Prostate gland (tissue), 2 donors: ENCODE measurements at regions of chr13 and their contacts with region 1.

Region 1: DNA sequence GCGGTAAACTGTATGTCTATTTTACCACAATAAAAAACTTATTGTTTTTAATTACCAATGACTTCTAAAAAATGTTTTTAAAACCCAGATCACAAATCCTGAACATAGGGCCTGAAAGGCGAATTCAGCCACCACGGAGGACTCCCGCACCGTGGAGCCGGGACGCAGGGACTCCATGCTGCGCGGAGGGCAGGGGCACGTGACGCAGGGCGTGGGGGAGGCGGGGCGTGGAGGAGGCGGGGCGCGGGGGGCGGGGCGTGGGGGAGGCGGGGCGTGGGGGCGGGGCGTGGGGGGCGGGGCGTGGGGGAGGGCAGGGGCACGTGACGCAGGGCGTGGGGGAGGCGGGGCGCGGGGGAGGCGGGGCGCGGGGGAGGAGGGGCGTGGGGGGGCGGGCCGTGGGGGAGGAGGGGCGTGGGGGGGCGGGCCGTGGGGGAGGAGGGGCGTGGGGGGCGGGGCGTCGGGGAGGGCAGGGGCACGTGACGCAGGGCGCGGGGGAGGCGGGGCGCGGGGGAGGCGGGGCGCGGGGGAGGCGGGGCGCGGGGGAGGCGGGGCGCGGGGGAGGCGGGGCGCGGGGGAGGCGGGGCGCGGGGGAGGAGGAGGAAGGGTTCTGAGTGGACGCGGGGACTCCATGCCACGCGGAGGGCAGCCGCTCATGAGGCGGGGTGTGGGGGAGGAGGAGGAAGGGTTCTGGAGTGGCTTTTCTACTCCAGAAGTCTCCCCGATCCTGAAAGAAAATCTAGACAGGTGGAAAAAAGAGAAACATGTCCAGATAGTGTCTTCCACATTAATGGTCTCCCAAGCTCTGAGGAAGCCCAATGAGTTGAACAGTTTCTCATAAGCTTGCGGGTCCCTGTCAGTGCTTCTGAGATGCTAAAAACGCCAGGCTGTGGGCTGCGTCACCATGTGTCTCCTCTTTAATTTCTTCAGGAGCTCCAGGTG is 4.4 kb upstream of the PROZ start:
- DNase-seq: peak; percentile 76
- H3K4me3 ChIP-seq: peak overlapping the region; percentile 24 to 25
- H3K27ac ChIP-seq: peak overlapping the region; percentile 75 to 76
- H3K4me1 ChIP-seq: no peaks in the 10 kb centered on the region
- H3K27me3 ChIP-seq: no peaks in the 10 kb centered on the region
- CTCF ChIP-seq: no peak
- POLR2A ChIP-seq: peak; percentile 62

Region 2: DNA sequence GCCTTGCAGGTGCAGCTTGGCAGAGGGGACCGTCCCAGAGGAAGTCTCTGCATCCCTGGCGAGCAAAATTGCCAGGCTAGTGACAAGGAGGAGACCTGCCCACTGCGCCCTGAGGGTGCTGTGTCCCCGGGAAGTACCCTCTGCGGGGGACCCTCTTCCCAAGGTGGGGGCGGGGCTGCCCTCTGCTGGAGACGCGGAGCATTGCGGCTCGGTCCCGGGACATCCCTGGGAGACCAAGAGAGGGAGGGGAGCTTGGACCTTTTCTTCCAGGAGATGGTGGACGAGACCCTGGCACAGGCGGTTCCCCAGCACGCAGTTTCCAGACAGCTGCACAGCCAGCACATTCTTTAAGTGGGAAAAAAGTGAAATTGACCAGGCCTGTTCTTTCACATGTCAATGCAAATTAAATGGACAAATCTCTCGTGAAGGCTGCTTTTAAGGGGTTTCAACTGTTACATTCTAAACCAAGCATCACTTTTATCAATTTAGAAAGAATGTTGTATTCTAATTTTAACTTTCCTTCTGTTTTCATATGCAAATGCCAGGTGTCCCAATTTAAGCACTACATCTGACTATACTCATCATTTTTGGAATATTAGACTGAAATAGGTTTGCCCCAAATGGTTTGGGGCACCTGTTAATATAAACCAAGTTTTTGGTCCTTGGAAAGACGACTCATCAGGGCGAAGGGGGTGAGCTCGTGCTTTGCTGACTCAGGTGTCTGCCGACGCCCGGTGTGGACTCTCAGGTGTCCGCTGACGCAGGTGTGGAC is 124.4 kb before region 1 on chr13:
- intact Hi-C with region 1: no loop called
- DNase-seq: no peak
- H3K4me3 ChIP-seq: no peak overlapping the region
- H3K27ac ChIP-seq: no peak overlapping the region
- H3K4me1 ChIP-seq: no peaks in the 10 kb centered on the region
- H3K27me3 ChIP-seq: no peaks in the 10 kb centered on the region
- CTCF ChIP-seq: peak; percentile 73 to 91 (median 88)
- POLR2A ChIP-seq: no peak

Region 3: DNA sequence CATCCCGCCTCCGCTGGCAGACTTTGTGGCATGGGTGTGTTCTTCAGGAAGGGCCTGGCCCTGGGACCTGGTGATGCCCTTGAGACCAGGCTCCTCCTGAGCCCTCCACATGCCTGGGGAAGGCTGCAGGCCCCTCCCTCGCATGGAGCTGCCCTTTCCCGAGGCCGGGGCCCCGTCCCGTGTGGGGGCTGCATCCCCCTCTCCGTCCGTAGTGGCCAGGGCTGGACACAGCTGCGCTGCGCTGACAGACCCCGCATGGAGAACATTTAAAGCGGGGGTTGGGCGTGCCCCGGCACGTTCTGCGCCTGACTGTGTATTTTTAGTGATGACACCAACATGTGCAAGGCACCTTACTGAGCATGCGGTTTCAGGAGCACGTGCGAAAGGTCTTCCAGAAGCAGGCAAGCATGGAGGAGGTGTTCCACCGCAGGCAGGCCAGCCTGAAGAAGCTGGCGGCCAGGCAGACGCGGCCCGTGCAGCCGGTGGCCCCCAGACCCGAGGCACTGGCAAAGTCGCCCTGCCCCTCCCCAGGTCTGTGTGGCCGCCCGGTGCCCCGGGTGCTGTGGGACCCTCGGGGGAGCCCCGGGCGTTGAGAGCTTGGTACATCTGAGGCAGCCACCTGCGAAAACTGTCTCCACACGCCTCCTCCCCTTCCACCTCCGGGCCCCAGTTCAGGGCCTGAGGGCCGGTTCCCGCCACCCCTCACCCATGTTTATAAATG is 77.2 kb before region 1 on chr13:
- intact Hi-C with region 1: no loop called
- DNase-seq: no peak
- H3K4me3 ChIP-seq: no peak overlapping the region
- H3K27ac ChIP-seq: no peak overlapping the region
- H3K4me1 ChIP-seq: no peaks in the 10 kb centered on the region
- H3K27me3 ChIP-seq: no peaks in the 10 kb centered on the region
- CTCF ChIP-seq: no peak
- POLR2A ChIP-seq: no peak

Region 4: DNA sequence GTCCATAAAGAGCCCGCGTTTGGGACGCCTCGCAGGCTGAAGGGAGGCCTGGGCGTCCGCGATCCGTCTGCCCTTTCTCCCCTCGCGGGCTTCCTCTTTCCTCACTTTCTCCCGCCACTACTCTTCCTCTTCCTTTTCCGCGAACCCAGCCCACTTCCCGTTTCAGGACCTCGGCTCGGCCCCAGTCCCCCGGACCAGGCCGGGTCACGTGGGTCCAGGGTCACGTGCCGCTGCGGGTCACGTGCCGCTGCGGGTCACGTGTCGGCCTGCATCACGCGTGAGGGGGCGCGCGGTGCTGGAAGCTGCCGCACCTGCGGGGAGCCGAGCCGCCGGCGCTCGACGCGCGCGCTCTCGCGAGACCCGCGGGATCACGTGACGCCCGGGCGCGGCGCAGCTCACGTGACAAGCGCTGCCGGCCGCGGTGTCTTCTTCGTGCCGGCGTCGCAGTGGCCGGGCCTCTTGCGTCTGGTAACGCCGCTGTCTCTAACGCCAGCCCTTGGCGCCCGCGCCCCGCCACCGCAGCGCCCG is 142.8 kb after region 1 on chr13 and contains the start of gene LAMP1:
- intact Hi-C with region 1: loop called (anchors 10 kb)
- DNase-seq: peak; percentile 94
- H3K4me3 ChIP-seq: peak within 1 kb of the TSS; percentile 90
- H3K27ac ChIP-seq: peak within 1 kb of the TSS; percentile 83 to 86
- H3K4me1 ChIP-seq: no peaks in the 10 kb centered on the region
- H3K27me3 ChIP-seq: no peaks in the 10 kb centered on the region
- CTCF ChIP-seq: peak in 2 of 4 experiments; percentile 24 to 33
- POLR2A ChIP-seq: peak; percentile 56
- total RNA-seq, gene LAMP1: 214 to 246 TPM

Region 5: GRCh38 chr13:113490496-113491417 is 336.7 kb after region 1 on chr13 and contains the start of gene DCUN1D2:
- intact Hi-C with region 1: loop called (anchors 10 kb)
- DNase-seq: peak; percentile 92
- H3K4me3 ChIP-seq: peak within 1 kb of the TSS; percentile 89 to 93
- H3K27ac ChIP-seq: peak within 1 kb of the TSS; percentile 82 to 84
- H3K4me1 ChIP-seq: peaks cover 3% of the 10 kb centered on the region
- H3K27me3 ChIP-seq: no peaks in the 10 kb centered on the region
- CTCF ChIP-seq: peak in 1 of 4 experiments; percentile 25
- POLR2A ChIP-seq: peak; percentile 90
- total RNA-seq, gene DCUN1D2: 11.0 to 48.0 TPM

Region 6: DNA sequence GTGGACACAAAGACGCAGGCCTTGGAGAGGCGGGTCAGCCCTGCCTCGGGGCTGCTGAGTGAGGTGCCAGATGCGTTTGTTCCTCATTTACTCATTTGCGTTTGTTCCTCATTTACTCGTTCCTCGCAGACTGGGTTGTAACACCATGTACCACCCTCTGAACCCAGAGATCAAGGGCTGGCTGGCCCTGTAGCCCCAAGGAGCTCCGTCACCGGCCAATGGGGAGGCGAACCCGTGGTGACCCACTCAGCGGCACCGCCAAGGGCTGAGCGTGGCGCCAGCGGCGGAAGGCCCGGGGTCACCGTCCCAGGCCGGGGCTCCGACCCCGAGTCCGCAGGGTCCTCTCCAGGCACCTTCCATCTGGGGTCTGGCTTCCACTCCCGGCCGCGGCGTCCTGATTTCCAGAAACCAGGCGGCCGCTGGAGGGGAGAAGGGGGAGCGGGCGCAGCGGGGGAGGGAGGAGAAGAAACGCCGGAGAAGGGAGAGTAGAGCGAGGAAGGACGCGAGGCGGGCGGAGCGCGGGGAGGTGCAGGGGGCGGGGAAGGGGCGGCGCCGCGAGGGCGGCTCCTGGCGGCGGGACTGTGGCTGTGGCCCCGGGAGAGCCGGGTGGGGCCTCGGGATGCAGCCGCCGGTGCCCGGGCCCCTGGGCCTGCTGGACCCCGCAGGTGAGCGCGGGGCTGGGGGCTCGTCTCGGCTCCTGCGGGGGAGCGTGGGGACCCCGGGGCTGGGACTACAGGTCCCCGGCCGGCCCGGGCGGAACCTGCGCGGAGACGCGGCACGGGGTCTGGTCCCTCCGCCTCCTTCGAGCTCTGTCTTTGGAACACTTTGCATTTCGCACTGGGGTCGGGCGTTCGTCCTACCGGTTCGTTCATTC is 604.8 kb after region 1 on chr13 and contains the start of gene TMEM255B:
- intact Hi-C with region 1: no loop called
- DNase-seq: peak; percentile 71
- H3K4me3 ChIP-seq: peak within 1 kb of the TSS; percentile 52 to 60
- H3K27ac ChIP-seq: peak within 1 kb of the TSS; percentile 70 to 79
- H3K4me1 ChIP-seq: no peaks in the 10 kb centered on the region
- H3K27me3 ChIP-seq: no peaks in the 10 kb centered on the region
- CTCF ChIP-seq: peak; percentile 12 to 47 (median 32)
- POLR2A ChIP-seq: peak; percentile 26
- total RNA-seq, gene TMEM255B: 0.96 to 4.6 TPM